H1 (cell line): ENCODE measurements at regions of chr14 and their contacts with region 1.

Region 1: DNA sequence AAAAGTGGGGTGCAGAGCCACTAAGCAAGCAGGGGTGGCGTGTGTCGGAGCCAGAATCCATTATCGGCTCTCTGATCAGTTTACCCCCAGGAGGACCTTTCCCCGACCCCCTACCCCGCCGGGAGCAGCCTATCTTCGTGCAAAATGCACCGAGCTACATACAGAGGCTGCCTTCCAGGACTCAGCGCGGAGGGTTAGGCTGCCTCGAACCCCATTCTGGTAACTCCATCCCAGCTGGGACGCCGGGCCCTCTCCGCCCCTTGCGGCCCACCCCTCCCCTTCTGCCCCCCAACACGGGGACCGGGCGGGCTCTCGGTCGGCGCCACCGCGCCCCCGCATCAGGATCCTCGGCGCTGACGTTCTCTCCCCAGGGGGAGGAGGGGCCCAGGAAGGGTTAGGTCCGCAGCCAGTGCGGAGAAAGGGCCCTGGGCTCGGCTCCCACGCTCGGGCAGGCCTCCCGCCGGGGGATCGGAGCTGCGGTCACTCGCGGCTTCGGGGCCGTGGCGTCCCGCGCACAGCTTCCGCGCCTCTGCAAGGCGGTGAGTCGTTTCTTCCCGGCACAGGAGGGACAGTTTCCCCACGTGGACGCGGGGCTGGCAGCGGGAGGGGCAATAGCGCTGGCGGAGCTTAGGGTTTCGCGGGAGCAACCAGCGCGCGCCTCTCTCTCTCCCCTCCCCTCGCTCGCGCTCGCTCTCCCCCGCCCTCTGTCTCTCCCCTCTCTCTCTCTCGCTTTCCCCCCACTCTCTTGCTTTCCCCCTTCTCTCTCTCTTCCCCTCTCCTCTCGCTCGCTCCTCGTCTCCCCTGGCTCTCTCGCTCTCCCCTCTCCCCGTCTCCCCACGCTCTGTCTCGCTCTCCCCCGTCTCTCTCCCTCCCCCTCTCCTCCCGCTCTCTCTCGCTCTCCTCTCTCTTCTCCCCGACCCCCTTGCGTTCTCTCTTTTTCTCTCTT is 12.5 kb upstream of the MAP3K9 start:
- DNase-seq: peak in 1 of 2 experiments; percentile 82
- H3K4me3 ChIP-seq: peak overlapping the region; percentile 76 to 88 (median 81)
- H3K27ac ChIP-seq: 0 out of 2 replicates have a peak overlapping the region, but pooled peaks have one; percentile 27
- H3K4me1 ChIP-seq: peaks cover 2 to 11% (median 7%) of the 10 kb centered on the region in 4 experiments; a peak in 5 of 7 replicates
- H3K27me3 ChIP-seq: peaks cover 1 to 8% (median 6%) of the 10 kb centered on the region in 4 experiments; a peak in 5 of 7 replicates
- CTCF ChIP-seq: peak in 1 of 3 experiments; percentile 8; a peak in 1 of 4 replicates
- EP300 ChIP-seq: no peak
- POLR2A ChIP-seq: no peak
- RAD21 ChIP-seq: no peak

Region 2: DNA sequence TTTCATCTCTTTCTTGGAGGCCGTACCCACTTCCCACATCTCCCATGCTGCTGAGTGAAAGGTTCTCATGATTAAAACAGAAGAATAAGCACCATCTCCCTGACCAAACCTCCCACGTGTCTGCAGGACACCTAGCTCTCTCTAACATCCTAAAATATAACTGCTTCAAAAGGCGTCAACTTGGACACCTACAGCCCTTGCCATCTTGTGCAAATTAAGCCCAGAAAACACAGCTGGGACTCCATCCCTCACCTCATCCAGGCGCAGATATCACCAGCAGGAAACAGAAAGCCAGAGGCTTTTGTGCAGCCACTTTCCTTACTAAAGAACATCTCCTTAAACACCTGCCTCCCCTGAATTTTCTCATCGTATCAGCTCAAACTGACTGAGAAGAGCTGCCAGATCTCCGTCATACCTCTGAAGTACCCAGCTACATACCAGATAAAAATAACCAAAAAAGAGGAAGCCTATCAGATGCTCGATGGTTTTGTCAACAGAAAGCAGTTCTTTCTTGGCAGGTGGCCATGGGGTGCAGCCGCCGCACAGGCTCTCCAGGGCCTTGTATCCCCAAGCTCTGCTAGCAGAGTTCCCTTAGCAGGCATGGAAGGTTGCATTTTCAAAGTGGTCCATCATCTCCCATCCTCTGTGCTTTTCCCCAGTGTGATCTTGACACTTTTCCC is 41.3 kb before region 1 on chr14:
- CTCF ChIA-PET with region 1: interaction called, 15 read pairs
- POLR2A ChIA-PET with region 1: no interaction called
- DNase-seq: no peak
- H3K4me3 ChIP-seq: no peak overlapping the region
- H3K27ac ChIP-seq: no peak overlapping the region
- H3K4me1 ChIP-seq: no peaks in the 10 kb centered on the region
- H3K27me3 ChIP-seq: no peaks in the 10 kb centered on the region
- CTCF ChIP-seq: no peak
- EP300 ChIP-seq: no peak
- POLR2A ChIP-seq: no peak
- RAD21 ChIP-seq: no peak

Region 3: DNA sequence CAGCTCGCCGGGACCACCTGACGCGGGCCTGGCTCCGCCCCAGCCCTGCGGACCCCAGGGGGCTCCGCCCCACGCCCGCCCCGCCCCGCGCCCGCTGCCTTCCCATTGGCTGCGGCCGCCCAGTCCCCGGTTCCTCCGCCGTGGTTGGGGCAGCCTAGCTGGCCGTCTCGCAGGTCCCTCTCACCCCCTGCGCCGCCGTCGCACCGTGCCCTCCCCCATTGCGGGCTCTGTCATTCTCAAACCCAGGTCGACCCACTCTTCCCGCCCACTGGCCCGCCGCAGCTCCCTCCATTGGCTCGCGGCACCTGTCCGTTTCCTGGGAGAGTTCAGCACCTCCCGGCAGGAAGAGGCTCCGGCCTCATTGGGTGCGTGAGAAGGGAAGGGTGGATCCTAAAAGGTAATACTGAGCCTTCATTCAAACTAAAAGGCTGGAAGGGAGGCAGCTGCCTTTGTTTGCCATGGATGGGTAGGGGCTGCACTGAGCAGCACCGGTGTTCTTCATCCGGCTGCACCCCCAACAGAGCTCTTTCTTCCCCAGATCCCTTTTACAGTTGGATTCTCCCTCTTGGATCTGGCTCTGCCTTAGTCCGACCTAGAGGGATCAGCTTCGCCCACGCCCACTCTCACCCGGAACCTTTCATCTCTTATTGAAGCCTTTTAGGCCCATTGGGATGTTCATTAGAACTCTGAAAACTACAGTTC is 12.2 kb before region 1 on chr14:
- CTCF ChIA-PET with region 1: interaction called, 19 read pairs
- POLR2A ChIA-PET with region 1: interaction called, 57 read pairs
- DNase-seq: peak; percentile 96 to 98
- H3K4me3 ChIP-seq: peak overlapping the region; percentile 73 to 92 (median 81)
- H3K27ac ChIP-seq: peak overlapping the region; percentile 40
- H3K4me1 ChIP-seq: peaks cover 0 to 3% (median 2%) of the 10 kb centered on the region in 4 experiments; a peak in 4 of 7 replicates
- H3K27me3 ChIP-seq: no peaks in the 10 kb centered on the region
- CTCF ChIP-seq: no peak
- EP300 ChIP-seq: peak in 1 of 2 experiments; percentile 21; a peak in 1 of 3 replicates
- POLR2A ChIP-seq: peak; percentile 52 to 87
- RAD21 ChIP-seq: no peak

Region 4: GRCh38 chr14:70856851-70857495 is 35.1 kb after region 1 on chr14:
- CTCF ChIA-PET with region 1: interaction called, 12 read pairs
- POLR2A ChIA-PET with region 1: no interaction called
- DNase-seq: no peak
- H3K4me3 ChIP-seq: no peak overlapping the region
- H3K27ac ChIP-seq: no peak overlapping the region
- H3K4me1 ChIP-seq: no peaks in the 10 kb centered on the region
- H3K27me3 ChIP-seq: no peaks in the 10 kb centered on the region
- CTCF ChIP-seq: no peak
- EP300 ChIP-seq: no peak
- POLR2A ChIP-seq: no peak
- RAD21 ChIP-seq: no peak

Region 5: GRCh38 chr14:71031000-71031399 is 209.1 kb after region 1 on chr14:
- CTCF ChIA-PET with region 1: no interaction called
- POLR2A ChIA-PET with region 1: no interaction called
- DNase-seq: no peak
- H3K4me3 ChIP-seq: no peak overlapping the region
- H3K27ac ChIP-seq: no peak overlapping the region
- H3K4me1 ChIP-seq: no peaks in the 10 kb centered on the region
- H3K27me3 ChIP-seq: peaks cover 0 to 1% (median 0%) of the 10 kb centered on the region in 4 experiments; a peak in 1 of 7 replicates
- CTCF ChIP-seq: no peak
- EP300 ChIP-seq: no peak
- POLR2A ChIP-seq: no peak
- RAD21 ChIP-seq: no peak